ENCODE measurements at regions of chr7 and their contacts with region 1.

Region 1: GRCh38 chr7:123865517-123866117 is 20.6 kb downstream of the HYAL4 start:
- DNase-seq: peak in 1 of 2 donors; percentile 78
- ATAC-seq: peak; percentile 59 to 81 (median 72)
- H3K4me3 ChIP-seq: no peak overlapping the region
- H3K4me3 Mint-ChIP-seq: no peak overlapping the region
- H3K27ac ChIP-seq: no peak overlapping the region
- H3K27ac Mint-ChIP-seq: no peak overlapping the region
- H3K4me1 ChIP-seq: no peaks in the 10 kb centered on the region
- H3K4me1 Mint-ChIP-seq: no peaks in the 10 kb centered on the region
- H3K27me3 ChIP-seq: no peaks in the 10 kb centered on the region
- H3K27me3 Mint-ChIP-seq: peaks cover 5 to 7% of the 10 kb centered on the region in 2 donors
- CTCF ChIP-seq: peak; percentile 75

Region 2: DNA sequence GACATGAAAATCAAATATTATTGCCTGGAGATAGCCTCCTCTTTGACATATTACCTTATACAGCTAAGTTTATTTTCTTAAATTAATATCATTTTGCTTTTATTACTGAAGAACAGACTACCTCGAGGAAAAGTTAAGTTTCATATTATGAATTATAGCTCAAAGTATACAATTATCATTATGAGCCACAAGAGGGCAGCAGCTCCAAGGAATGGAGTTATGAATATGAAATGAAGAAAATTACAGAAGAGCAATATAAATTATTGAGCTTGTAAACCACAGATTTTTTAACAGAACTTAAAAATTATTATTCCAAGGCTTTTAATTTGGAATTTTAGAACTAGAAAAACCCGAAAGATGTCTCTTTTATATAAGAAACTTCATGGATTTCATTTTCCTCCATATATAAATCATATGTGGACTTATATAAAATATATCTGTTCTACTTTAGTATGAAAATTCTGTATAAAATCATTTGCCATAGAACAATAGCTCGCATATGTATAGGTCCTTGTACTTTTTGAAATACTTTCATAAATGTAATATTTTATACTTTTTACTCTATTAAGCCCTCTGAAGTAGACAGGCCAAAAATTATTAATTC is 371.3 kb before region 1 on chr7:
- intact Hi-C with region 1: loop called (anchors 1 kb)
- DNase-seq: peak in 1 of 2 donors; percentile 71
- ATAC-seq: peak; percentile 55 to 72 (median 69)
- H3K4me3 ChIP-seq: no peak overlapping the region
- H3K4me3 Mint-ChIP-seq: no peak overlapping the region
- H3K27ac ChIP-seq: no peak overlapping the region
- H3K27ac Mint-ChIP-seq: no peak overlapping the region
- H3K4me1 ChIP-seq: no peaks in the 10 kb centered on the region
- H3K4me1 Mint-ChIP-seq: no peaks in the 10 kb centered on the region
- H3K27me3 ChIP-seq: peaks cover 12% of the 10 kb centered on the region
- H3K27me3 Mint-ChIP-seq: peaks cover 13 to 37% of the 10 kb centered on the region in 2 donors
- CTCF ChIP-seq: peak; percentile 88

Region 3: DNA sequence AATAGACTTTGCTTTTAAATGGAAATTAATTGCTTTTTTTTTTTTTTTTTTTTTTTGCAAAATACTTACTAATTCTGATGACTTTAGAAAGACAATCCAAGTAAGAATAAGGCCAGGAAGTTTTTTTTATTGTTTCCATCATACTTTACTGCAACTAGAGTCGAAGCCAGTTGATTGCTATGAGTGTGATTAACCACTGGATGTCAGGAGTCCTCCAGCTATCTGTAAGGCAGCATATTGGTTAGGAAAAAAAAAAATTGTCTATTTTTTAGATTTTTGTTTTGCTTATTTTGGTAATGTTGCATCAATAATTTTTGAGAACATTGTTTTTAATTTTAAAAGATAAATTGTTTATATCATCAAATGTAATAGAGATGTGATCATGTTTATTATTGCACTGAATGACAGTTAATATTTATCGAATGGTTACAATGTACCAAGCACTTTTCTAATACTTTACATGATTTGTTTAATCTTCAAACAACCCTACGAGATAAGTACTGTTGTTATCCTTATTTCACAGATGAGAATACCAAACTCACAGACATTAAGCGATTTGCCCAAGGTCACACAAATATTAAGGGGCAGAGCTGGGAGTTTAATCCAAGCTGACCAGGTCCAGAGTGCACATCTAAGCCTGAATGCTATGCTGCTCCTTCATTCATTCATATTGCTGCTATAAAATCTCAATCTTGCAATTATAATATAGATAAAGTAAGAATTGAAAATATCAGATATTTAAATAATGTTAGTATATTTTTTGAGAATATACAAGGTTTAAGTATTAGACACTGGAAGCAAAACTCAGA is 229.9 kb before region 1 on chr7:
- intact Hi-C with region 1: loop called (anchors 1 kb)
- DNase-seq: peak in 1 of 2 donors; percentile 31
- ATAC-seq: no peak
- H3K4me3 ChIP-seq: no peak overlapping the region
- H3K4me3 Mint-ChIP-seq: no peak overlapping the region
- H3K27ac ChIP-seq: no peak overlapping the region
- H3K27ac Mint-ChIP-seq: no peak overlapping the region
- H3K4me1 ChIP-seq: no peaks in the 10 kb centered on the region
- H3K4me1 Mint-ChIP-seq: no peaks in the 10 kb centered on the region
- H3K27me3 ChIP-seq: peaks cover 2% of the 10 kb centered on the region
- H3K27me3 Mint-ChIP-seq: peaks cover 14 to 19% of the 10 kb centered on the region in 2 donors
- CTCF ChIP-seq: peak; percentile 15

Region 4: DNA sequence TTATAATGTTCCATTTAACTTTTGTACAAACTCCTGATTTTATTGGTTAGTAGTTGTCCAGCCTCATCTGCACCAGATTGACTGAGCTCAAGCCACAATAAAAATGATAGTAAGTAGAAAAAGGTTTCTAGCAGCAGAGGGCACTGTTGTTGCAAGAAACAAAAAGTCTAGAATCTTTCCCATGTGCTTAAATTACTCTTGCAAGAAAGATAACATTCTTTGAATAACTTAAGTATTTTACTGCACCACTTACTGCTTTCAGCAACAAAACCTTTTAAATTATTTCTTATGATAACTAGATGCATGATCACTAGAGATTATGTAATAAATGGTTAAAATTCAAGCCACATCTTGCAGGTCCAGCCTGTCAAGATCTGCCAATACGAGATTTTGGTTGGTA is 182.9 kb before region 1 on chr7:
- intact Hi-C with region 1: loop called (anchors 1 kb)
- DNase-seq: peak in 1 of 2 donors; percentile 65
- ATAC-seq: peak in 1 of 3 donors; percentile 45
- H3K4me3 ChIP-seq: no peak overlapping the region
- H3K4me3 Mint-ChIP-seq: no peak overlapping the region
- H3K27ac ChIP-seq: no peak overlapping the region
- H3K27ac Mint-ChIP-seq: no peak overlapping the region
- H3K4me1 ChIP-seq: no peaks in the 10 kb centered on the region
- H3K4me1 Mint-ChIP-seq: no peaks in the 10 kb centered on the region
- H3K27me3 ChIP-seq: no peaks in the 10 kb centered on the region
- H3K27me3 Mint-ChIP-seq: no peaks in the 10 kb centered on the region
- CTCF ChIP-seq: peak; percentile 55

Region 5: GRCh38 chr7:123823898-123824753 is 41.5 kb before region 1 on chr7:
- intact Hi-C with region 1: no loop called
- DNase-seq: peak in 1 of 2 donors; percentile 47
- ATAC-seq: no peak
- H3K4me3 ChIP-seq: no peak overlapping the region
- H3K4me3 Mint-ChIP-seq: no peak overlapping the region
- H3K27ac ChIP-seq: no peak overlapping the region
- H3K27ac Mint-ChIP-seq: no peak overlapping the region
- H3K4me1 ChIP-seq: no peaks in the 10 kb centered on the region
- H3K4me1 Mint-ChIP-seq: peaks cover 0 to 8% of the 10 kb centered on the region in 2 donors
- H3K27me3 ChIP-seq: no peaks in the 10 kb centered on the region
- H3K27me3 Mint-ChIP-seq: peaks cover 12 to 20% of the 10 kb centered on the region in 2 donors
- CTCF ChIP-seq: no peak

Region 6: GRCh38 chr7:123876557-123877256 is 11.1 kb after region 1 on chr7:
- intact Hi-C with region 1: loop called (anchors 1 kb)
- DNase-seq: no peak
- ATAC-seq: no peak
- H3K4me3 ChIP-seq: no peak overlapping the region
- H3K4me3 Mint-ChIP-seq: no peak overlapping the region
- H3K27ac ChIP-seq: no peak overlapping the region
- H3K27ac Mint-ChIP-seq: no peak overlapping the region
- H3K4me1 ChIP-seq: no peaks in the 10 kb centered on the region
- H3K4me1 Mint-ChIP-seq: peaks cover 0 to 4% of the 10 kb centered on the region in 2 donors
- H3K27me3 ChIP-seq: no peaks in the 10 kb centered on the region
- H3K27me3 Mint-ChIP-seq: peaks cover 0 to 3% of the 10 kb centered on the region in 2 donors
- CTCF ChIP-seq: no peak

Measured in natural killer cell (primary cell).